Activated CD4-positive, alpha-beta T cell treated with anti-CD3 and anti-CD28 coated beads for 36 hours (primary cell): ENCODE measurements at regions of chr9 and their contacts with region 1.

Region 1: DNA sequence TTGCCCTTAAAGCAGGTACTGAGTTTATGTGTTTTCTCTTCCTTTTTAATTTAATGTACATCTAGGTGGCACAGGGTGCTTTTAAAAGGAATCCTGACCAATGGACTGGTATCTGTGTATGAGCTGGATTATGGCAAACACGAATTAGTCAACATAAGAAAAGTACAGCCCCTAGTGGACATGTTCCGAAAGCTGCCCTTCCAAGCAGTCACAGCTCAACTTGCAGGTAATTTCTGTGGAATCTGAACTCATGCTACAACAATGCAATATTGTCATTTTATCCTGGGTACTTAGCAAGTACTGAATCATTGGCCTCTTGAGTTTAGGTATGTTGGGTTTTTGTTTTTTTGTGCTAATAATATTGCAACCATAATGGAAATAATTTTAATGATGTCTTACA is 14.4 kb upstream of the TMOD1 start:
- DNase-seq: no peak
- ATAC-seq: no peak
- H3K4me3 Mint-ChIP-seq: no peak overlapping the region
- H3K27ac Mint-ChIP-seq: no peak overlapping the region
- H3K4me1 Mint-ChIP-seq: no peaks in the 10 kb centered on the region
- H3K27me3 Mint-ChIP-seq: no peaks in the 10 kb centered on the region

Region 2: GRCh38 chr9:96109680-96110351 is 1377.3 kb before region 1 on chr9:
- CTCF ChIA-PET with region 1: no interaction called
- POLR2A ChIA-PET with region 1: no interaction called
- intact Hi-C with region 1: no loop called
- DNase-seq: no peak
- ATAC-seq: no peak
- H3K4me3 Mint-ChIP-seq: no peak overlapping the region
- H3K27ac Mint-ChIP-seq: no peak overlapping the region
- H3K4me1 Mint-ChIP-seq: no peaks in the 10 kb centered on the region
- H3K27me3 Mint-ChIP-seq: peaks cover 8% of the 10 kb centered on the region

Region 3: GRCh38 chr9:97437051-97437600 is 50.0 kb before region 1 on chr9:
- CTCF ChIA-PET with region 1: no interaction called
- POLR2A ChIA-PET with region 1: no interaction called
- intact Hi-C with region 1: loop called in 1 of 2 experiments (anchors 5 kb)
- DNase-seq: no peak
- ATAC-seq: no peak
- H3K4me3 Mint-ChIP-seq: no peak overlapping the region
- H3K27ac Mint-ChIP-seq: no peak overlapping the region
- H3K4me1 Mint-ChIP-seq: no peaks in the 10 kb centered on the region
- H3K27me3 Mint-ChIP-seq: no peaks in the 10 kb centered on the region

Region 4: GRCh38 chr9:97468658-97469448 is 18.3 kb before region 1 on chr9:
- CTCF ChIA-PET with region 1: interaction called, 15 read pairs
- POLR2A ChIA-PET with region 1: no interaction called
- intact Hi-C with region 1: no loop called
- DNase-seq: peak; percentile 66
- ATAC-seq: peak; percentile 74
- H3K4me3 Mint-ChIP-seq: no peak overlapping the region
- H3K27ac Mint-ChIP-seq: no peak overlapping the region
- H3K4me1 Mint-ChIP-seq: no peaks in the 10 kb centered on the region
- H3K27me3 Mint-ChIP-seq: no peaks in the 10 kb centered on the region

Region 5: GRCh38 chr9:97510797-97511761 is 24.0 kb after region 1 on chr9:
- CTCF ChIA-PET with region 1: no interaction called
- POLR2A ChIA-PET with region 1: no interaction called
- intact Hi-C with region 1: no loop called
- DNase-seq: peak; percentile 37
- ATAC-seq: peak; percentile 82
- H3K4me3 Mint-ChIP-seq: no peak overlapping the region
- H3K27ac Mint-ChIP-seq: peak overlapping the region; percentile 34
- H3K4me1 Mint-ChIP-seq: peaks cover 10% of the 10 kb centered on the region
- H3K27me3 Mint-ChIP-seq: peaks cover 8% of the 10 kb centered on the region

Region 6: DNA sequence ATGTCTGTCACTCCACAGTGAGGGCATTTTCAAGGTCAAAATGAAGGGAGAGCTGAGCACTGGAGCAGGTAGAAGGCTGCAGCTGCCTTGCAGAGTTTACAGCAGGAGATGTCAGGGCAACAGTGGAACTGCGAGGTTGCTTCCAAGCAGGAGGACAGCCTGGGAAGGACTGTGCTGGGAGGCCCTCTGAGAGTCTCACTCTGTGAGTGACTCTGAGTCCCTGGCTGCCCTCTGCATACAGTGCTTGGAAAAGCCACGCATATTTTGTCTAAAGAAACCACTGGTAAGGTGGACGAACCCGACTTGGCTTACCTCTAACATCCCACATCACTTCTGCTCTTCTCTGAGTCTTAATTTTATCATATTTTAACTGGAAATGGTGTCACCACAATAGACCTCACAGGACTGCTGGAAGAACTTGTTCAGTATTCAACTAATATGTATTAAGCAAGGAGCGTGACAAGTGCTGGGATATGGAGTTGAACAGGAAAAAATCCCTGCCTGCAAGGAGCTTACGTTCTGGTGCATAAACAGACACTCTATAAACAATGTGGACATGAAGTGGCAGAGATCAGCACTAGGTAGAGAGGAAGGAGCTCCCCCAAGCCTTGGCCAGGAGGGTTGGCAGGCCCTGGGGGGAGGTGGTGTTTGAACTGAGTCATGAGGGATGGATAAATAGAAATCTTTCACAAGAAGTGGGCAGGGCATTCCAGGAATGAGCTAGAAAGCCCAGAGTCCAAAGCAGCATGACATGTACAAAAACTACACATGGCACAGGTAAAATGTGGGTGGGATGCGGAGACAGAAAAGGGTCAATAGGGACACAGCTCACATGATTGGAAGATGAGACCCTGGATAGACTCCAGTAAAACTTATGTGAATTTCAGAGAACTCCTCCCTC is 301.9 kb after region 1 on chr9:
- CTCF ChIA-PET with region 1: no interaction called
- POLR2A ChIA-PET with region 1: no interaction called
- intact Hi-C with region 1: no loop called
- DNase-seq: no peak
- ATAC-seq: no peak
- H3K4me3 Mint-ChIP-seq: no peak overlapping the region
- H3K27ac Mint-ChIP-seq: no peak overlapping the region
- H3K4me1 Mint-ChIP-seq: no peaks in the 10 kb centered on the region
- H3K27me3 Mint-ChIP-seq: peaks cover 3% of the 10 kb centered on the region